PC-3 (cell line): ENCODE measurements at regions of chr1 and their contacts with region 1.

Region 1: GRCh38 chr1:219985169-219985568 is 56.8 kb upstream of the SLC30A10 start:
- DNase-seq: no peak
- ATAC-seq: no peak
- H3K4me3 ChIP-seq: no peak overlapping the region
- H3K27ac ChIP-seq: no peak overlapping the region
- H3K4me1 ChIP-seq: no peaks in the 10 kb centered on the region
- H3K27me3 ChIP-seq: no peaks in the 10 kb centered on the region
- CTCF ChIP-seq: no peak

Region 2: DNA sequence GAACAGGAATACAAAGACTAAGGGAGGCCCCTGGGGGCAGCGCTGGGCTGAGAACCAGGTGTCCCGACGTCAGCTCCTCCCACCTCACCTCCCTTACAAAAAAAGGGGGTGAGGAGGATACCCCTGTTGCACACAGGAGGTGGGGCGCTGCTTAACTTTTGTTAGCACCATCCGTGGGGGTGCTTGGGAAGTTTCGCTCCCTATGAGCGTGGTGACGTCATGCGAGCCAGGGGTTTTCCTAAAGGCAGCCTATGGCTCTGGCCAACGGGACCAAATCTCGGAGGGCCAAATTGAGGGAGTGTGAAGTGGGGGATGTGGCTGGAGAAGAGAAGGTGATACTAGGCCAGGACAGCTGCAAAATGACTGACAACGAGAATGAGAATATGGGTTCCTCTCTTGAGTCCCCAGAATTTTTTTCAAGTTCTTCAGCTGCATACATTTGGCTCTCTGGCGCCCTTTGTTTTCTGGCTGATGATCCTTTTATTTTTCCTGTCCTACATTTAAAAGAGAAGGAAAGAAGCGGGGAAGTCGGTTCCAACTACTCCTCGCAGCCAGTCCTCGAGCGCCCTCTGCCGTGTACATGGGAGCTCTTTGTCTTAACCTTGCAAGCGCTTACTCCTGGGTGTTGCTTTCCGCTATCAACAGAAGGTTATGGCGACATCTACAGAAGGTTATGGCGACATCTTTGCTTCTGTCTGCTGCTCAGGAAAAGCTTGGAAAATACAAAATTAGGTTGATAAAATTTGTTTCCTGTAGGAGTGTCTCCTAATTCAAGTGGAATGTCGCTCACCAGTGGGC is 324.3 kb before region 1 on chr1:
- CTCF ChIA-PET with region 1: no interaction called
- POLR2A ChIA-PET with region 1: no interaction called
- intact Hi-C with region 1: no loop called
- DNase-seq: peak; percentile 99
- ATAC-seq: peak; percentile 99
- H3K4me3 ChIP-seq: peak overlapping the region; percentile 16; the same call in 1 of the 2 replicates
- H3K27ac ChIP-seq: no peak overlapping the region
- H3K4me1 ChIP-seq: peaks cover 25% of the 10 kb centered on the region
- H3K27me3 ChIP-seq: no peaks in the 10 kb centered on the region
- CTCF ChIP-seq: peak; percentile 99

Region 3: DNA sequence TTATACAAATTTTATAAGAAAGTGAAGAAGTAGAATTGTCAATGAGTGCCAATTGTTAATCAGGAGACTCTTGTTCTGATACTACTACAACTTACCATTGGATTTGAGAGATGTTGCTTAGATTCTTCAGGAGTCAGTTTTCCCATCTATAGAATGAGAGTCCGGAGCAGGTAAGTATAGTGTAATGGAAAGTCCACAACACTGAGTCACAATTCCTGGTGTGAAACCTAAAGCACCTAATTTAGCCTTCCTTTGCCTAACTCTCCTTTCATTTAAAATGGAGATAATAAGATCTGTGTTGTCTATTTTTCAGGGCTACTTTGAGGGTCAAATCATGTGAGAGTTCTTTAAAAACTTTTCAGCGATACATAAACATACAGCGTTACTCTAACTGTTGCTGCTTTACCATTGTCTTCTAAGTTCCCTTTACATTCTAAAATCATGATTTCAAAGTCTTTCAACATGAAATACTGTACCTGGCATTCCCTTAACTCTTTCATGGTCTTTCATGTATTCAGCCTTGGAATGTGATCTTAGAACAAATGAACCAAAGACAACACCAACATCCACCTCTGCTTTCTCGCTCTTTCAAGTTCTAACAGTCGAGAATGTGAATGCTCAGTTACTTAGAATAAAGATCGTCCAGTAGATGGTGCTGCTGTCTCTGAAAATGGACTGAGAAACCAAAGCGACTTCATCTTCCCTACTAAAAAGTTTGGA is 147.7 kb before region 1 on chr1:
- CTCF ChIA-PET with region 1: no interaction called
- POLR2A ChIA-PET with region 1: no interaction called
- intact Hi-C with region 1: no loop called
- DNase-seq: peak; percentile 91
- ATAC-seq: peak; percentile 92
- H3K4me3 ChIP-seq: no peak overlapping the region
- H3K27ac ChIP-seq: no peak overlapping the region
- H3K4me1 ChIP-seq: no peaks in the 10 kb centered on the region
- H3K27me3 ChIP-seq: peaks cover 53% of the 10 kb centered on the region
- CTCF ChIP-seq: peak; percentile 99

Region 4: GRCh38 chr1:219927956-219928790 is 57.0 kb before region 1 on chr1 and contains the start of gene SLC30A10:
- CTCF ChIA-PET with region 1: no interaction called
- POLR2A ChIA-PET with region 1: interaction called, 16 read pairs
- intact Hi-C with region 1: no loop called
- DNase-seq: no peak
- ATAC-seq: no peak
- H3K4me3 ChIP-seq: no peak within 1 kb of the TSS
- H3K27ac ChIP-seq: no peak within 1 kb of the TSS
- H3K4me1 ChIP-seq: no peaks in the 10 kb centered on the region
- H3K27me3 ChIP-seq: 0 out of 2 replicates have a peak, but pooled peaks cover 3% of the 10 kb centered on the region
- CTCF ChIP-seq: no peak
- total RNA-seq, gene SLC30A10: not detected in 2 replicates

Region 5: GRCh38 chr1:219938706-219939105 is 46.5 kb before region 1 on chr1:
- CTCF ChIA-PET with region 1: no interaction called
- POLR2A ChIA-PET with region 1: no interaction called
- intact Hi-C with region 1: no loop called
- DNase-seq: peak; percentile 83
- ATAC-seq: peak; percentile 90
- H3K4me3 ChIP-seq: no peak overlapping the region
- H3K27ac ChIP-seq: no peak overlapping the region
- H3K4me1 ChIP-seq: peaks cover 5% of the 10 kb centered on the region; the same call in 1 of the 2 replicates
- H3K27me3 ChIP-seq: peaks cover 38% of the 10 kb centered on the region
- CTCF ChIP-seq: no peak

Region 6: GRCh38 chr1:219959540-219960203 is 25.5 kb before region 1 on chr1:
- CTCF ChIA-PET with region 1: no interaction called
- POLR2A ChIA-PET with region 1: no interaction called
- intact Hi-C with region 1: no loop called
- DNase-seq: no peak
- ATAC-seq: no peak
- H3K4me3 ChIP-seq: no peak overlapping the region
- H3K27ac ChIP-seq: no peak overlapping the region
- H3K4me1 ChIP-seq: peaks cover 9% of the 10 kb centered on the region
- H3K27me3 ChIP-seq: peaks cover 17% of the 10 kb centered on the region
- CTCF ChIP-seq: no peak